ENCODE measurements at regions of chr12 and their contacts with region 1.

Region 1: GRCh38 chr12:34218165-34219045 is 196.1 kb downstream of the ALG10 start:
- DNase-seq: peak; percentile 57 to 77 (median 65)
- ATAC-seq: peak; percentile 78 to 94
- H3K4me3 ChIP-seq: peak overlapping the region; percentile 60
- H3K27ac ChIP-seq: no peak overlapping the region
- H3K4me1 ChIP-seq: no peaks in the 10 kb centered on the region
- H3K27me3 ChIP-seq: no peaks in the 10 kb centered on the region

Region 2: DNA sequence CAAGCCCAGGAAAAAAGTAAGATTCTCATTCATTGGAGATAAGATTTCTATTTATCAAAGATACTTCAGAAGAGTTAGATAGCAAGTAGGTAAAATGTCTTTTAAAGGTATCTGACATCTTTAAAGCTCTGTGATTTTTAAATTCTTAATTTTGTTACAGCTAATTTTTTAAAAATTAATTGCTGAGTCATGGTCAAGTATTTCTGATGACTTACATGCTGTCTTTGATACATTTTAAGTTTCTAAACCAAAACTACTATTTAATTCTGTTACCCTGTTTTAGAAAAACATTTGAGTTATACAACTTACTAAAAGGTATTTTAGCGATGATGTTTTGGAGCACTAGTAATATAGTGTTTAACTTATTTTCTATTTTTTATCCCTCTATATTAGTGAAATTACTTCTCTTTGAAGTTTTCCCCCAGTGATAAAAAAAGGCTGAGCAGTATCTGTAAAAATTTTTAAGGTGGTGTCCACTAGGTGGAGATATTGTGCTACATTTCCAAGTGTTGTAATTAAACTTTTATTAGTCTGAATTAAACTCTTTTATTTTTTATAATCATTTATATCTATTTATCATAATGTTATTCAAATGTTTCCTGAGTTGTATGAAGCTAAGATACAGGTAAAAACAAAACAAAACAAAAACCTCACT is 184.7 kb before region 1 on chr12:
- intact Hi-C with region 1: loop called in 1 of 4 experiments (anchors 10 kb)
- DNase-seq: no peak
- ATAC-seq: no peak
- H3K4me3 ChIP-seq: no peak overlapping the region
- H3K27ac ChIP-seq: no peak overlapping the region
- H3K4me1 ChIP-seq: no peaks in the 10 kb centered on the region
- H3K27me3 ChIP-seq: no peaks in the 10 kb centered on the region

Region 3: GRCh38 chr12:34119366-34119765 is 99.0 kb before region 1 on chr12:
- intact Hi-C with region 1: loop called (anchors 2 to 10 kb)
- DNase-seq: no peak
- ATAC-seq: no peak
- H3K4me3 ChIP-seq: no peak overlapping the region
- H3K27ac ChIP-seq: no peak overlapping the region
- H3K4me1 ChIP-seq: no peaks in the 10 kb centered on the region
- H3K27me3 ChIP-seq: no peaks in the 10 kb centered on the region

Region 4: GRCh38 chr12:34126239-34126641 is 92.2 kb before region 1 on chr12:
- intact Hi-C with region 1: loop called in 3 of 4 experiments (anchors 2 to 10 kb)
- DNase-seq: no peak
- ATAC-seq: peak in 1 of 2 donors; percentile 29
- H3K4me3 ChIP-seq: peak overlapping the region; percentile 33
- H3K27ac ChIP-seq: no peak overlapping the region
- H3K4me1 ChIP-seq: no peaks in the 10 kb centered on the region
- H3K27me3 ChIP-seq: no peaks in the 10 kb centered on the region

Measured in right cardiac atrium (tissue), 5 donors.